Ascending aorta (tissue), 2 donors: ENCODE measurements at regions of chr1 and their contacts with region 1.

Region 1: GRCh38 chr1:16032388-16033103 is 10.7 kb downstream of the CLCNKA start:
- DNase-seq: peak; percentile 59 to 94
- H3K4me3 ChIP-seq: no peak overlapping the region
- H3K27ac ChIP-seq: no peak overlapping the region
- H3K4me1 ChIP-seq: peaks cover 2 to 6% of the 10 kb centered on the region in 2 donors
- H3K27me3 ChIP-seq: no peaks in the 10 kb centered on the region
- CTCF ChIP-seq: peak; percentile 100

Region 2: DNA sequence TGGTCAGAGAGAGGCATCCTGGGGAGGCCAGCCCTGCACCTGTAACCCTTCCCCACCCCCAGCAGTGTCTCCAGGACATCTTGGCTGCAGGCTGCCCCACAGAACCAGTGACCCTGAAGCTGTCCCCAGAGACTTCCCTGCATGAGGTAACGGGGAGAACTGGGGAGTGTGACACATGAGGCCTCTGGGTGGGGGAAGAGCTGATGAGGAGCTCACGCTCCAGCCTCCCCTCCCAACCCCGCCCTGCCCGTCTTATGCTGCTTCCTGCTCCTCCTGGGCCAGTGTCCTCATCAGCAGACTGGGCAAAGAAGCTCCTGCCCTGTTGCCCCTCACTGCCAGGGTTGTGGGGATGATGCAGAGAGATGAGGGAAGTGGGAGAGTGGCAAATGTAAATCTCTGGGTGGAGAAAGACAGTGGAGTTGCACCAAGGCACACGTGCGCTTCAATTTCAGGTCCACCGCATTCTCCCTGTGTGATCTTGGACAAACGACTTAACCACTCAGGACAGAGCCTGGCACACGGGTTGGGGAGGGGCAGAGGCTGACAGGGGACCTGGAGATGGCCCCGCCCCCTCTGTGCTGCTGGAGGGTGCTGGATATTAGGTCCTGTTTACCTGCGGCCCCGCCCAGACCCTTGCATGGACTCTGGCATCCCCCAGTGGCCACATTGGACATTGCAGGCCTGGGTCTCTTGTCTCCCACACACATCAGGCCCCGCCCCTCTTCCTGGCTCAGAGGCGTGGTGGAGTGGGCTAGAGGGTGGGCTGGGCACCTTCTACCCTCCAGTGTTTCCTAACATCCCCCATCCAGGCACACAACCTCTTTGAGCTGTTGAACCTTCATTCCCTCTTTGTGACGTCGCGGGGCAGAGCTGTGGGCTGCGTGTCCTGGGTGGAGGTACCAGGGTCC is 23.3 kb after region 1 on chr1:
- intact Hi-C with region 1: loop called (anchors 1 kb)
- DNase-seq: peak; percentile 28 to 92
- H3K4me3 ChIP-seq: no peak overlapping the region
- H3K27ac ChIP-seq: no peak overlapping the region
- H3K4me1 ChIP-seq: no peaks in the 10 kb centered on the region
- H3K27me3 ChIP-seq: no peaks in the 10 kb centered on the region
- CTCF ChIP-seq: peak; percentile 93 to 94 (median 94)

Region 3: GRCh38 chr1:16300436-16300835 is 267.9 kb after region 1 on chr1:
- intact Hi-C with region 1: no loop called
- DNase-seq: peak in 1 of 2 donors; percentile 50
- H3K4me3 ChIP-seq: no peak overlapping the region
- H3K27ac ChIP-seq: peak overlapping the region in 1 of 2 donors; percentile 47
- H3K4me1 ChIP-seq: peaks cover 4 to 41% of the 10 kb centered on the region in 2 donors
- H3K27me3 ChIP-seq: no peaks in the 10 kb centered on the region
- CTCF ChIP-seq: no peak